ENCODE measurements at regions of chr4 and their contacts with region 1.

Region 1: GRCh38 chr4:139099366-139099982 is 77.5 kb downstream of the ELF2 start:
- DNase-seq: peak; percentile 59
- H3K27ac ChIP-seq: no peak overlapping the region
- CTCF ChIP-seq: peak; percentile 87

Region 2: DNA sequence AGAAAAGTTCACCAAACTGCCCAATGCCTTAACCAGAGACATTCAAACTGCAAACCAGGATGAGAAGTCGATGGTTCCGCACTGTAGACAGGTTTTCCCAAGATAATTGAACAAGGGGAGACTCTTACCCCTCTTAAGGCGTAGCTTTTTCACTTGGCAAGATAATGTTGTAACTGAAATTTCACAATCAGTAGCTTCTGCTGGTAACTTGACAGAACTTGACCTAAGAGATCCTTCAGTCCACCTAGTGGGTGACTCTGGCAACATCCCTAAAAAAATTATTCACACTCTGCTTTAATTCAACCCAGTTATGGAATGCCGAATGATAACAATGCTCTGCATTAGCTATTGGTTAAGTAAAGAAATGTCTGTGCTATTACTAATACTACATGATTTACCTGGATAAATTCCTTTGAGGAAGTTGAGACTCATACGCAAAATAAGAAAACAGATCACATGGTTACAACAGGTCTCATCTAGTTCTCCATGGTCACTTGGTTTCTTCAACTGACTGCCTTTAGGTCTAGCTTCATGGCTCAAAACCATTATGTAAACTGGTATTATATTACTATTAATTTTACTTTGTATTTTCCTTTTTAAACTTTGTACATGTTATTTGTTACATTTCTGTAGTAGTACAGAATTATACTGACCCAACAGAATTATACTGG is 68.4 kb after region 1 on chr4:
- CTCF ChIA-PET with region 1: interaction called, 17 read pairs
- POLR2A ChIA-PET with region 1: no interaction called
- DNase-seq: peak; percentile 92
- H3K27ac ChIP-seq: peak overlapping the region; percentile 73; the same call in 1 of the 2 replicates
- CTCF ChIP-seq: peak; percentile 69; the same call in 1 of the 2 replicates